ENCODE measurements at regions of chr15 and their contacts with region 1.

Region 1: DNA sequence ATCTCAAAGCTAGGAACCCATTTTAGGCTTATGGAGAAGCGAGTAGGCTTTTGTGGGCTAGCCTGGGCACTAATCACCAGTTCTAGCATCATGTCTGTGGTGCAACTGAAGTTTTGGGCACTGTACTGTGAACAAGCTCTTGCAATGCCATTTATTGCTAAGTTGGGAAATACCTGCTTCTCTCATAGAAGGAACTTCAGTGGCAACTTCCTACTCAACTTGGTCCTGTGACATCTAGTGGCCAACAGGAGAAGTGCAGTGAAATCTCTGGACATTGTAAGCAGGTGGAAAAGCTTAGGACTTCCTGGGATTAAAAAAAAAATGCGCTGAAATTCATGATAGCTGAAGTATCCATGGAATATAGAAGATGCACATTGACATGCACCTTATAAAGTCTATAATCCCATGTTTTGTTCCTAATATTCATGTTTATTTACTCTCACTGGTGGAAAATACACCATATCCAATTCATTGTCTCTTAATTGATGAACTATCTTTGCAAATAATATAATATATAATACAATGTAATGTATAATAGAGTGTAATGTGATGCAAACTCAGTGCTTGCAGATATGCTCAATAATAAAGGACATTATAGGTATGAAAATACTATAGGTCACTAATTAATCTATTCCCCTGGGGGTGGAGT is 6.5 kb upstream of the ALDH1A3 start:
- DNase-seq: peak; percentile 71
- ATAC-seq: peak; percentile 47
- H3K4me3 Mint-ChIP-seq: no peak overlapping the region
- H3K27ac Mint-ChIP-seq: no peak overlapping the region
- H3K4me1 Mint-ChIP-seq: peaks cover 17% of the 10 kb centered on the region
- H3K27me3 Mint-ChIP-seq: peaks cover 38% of the 10 kb centered on the region
- CTCF ChIP-seq: peak; percentile 83

Region 2: DNA sequence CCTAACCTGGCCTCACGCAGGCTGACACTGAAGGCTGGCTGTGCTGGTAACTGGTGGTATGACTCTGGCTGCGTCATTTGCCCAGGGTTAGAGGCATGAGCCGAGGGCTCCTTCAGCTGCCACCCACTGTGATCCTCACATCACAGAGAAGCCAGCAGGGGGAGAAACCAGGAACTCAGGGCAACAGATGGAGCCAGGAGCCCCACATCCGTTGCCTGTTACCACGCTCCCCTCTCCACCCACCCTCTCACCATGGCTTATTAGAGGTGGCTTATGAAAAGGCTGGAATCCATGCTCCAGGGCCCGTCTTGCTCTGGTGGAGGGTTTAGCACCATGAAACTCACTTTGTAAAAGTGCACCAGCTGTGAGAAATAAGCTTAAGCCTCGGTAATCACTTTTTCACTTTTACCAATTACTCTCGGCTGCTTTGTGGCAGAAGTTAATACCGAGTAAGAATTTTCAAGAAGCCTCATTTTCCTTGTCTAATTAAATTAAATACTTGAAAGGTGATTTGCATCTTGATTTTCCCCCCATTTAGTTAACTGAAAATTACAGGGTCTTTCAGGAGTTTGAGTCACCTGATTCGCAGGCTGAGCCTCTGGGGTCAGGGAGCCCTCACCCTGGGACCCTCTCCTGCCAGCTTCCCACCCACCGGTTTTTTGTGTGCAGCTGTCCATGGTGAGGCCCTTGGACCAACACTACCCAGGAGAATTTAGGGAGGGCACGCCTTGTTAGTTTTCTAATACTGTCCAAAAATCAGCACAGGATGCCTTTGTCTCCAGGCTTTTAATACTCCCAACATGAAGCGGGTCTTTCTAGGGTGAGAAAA is 209.9 kb before region 1 on chr15:
- CTCF ChIA-PET with region 1: interaction called, 10 read pairs
- POLR2A ChIA-PET with region 1: no interaction called
- DNase-seq: peak; percentile 59
- ATAC-seq: peak; percentile 91
- H3K4me3 Mint-ChIP-seq: no peak overlapping the region
- H3K27ac Mint-ChIP-seq: no peak overlapping the region
- H3K4me1 Mint-ChIP-seq: peaks cover 13% of the 10 kb centered on the region
- H3K27me3 Mint-ChIP-seq: no peaks in the 10 kb centered on the region
- CTCF ChIP-seq: no peak

Region 3: GRCh38 chr15:100737214-100737613 is 135.9 kb before region 1 on chr15:
- CTCF ChIA-PET with region 1: interaction called, 34 read pairs
- POLR2A ChIA-PET with region 1: no interaction called
- DNase-seq: no peak
- ATAC-seq: no peak
- H3K4me3 Mint-ChIP-seq: no peak overlapping the region
- H3K27ac Mint-ChIP-seq: no peak overlapping the region
- H3K4me1 Mint-ChIP-seq: no peaks in the 10 kb centered on the region
- H3K27me3 Mint-ChIP-seq: no peaks in the 10 kb centered on the region; the same call in 1 of the 2 replicates
- CTCF ChIP-seq: no peak

Region 4: DNA sequence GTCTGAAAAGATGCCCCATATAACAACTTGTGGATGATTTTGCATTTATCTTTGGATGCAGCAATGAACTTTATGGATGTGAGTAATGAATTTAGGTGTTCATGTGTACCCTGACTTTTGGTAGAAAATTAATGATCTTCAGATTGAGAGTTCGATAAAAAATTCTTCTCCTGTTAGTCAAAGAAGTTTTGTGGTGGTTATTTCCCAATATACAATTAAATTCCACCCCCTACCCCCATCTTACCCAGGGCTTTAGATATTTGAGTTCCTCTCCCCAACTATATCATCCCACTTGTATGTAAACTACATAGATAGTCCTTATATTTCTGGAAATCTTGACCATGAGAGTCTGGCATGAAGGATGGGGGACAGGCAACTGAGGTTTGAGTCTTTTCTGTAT is 119.7 kb before region 1 on chr15:
- CTCF ChIA-PET with region 1: no interaction called
- POLR2A ChIA-PET with region 1: no interaction called
- DNase-seq: no peak
- ATAC-seq: no peak
- H3K4me3 Mint-ChIP-seq: no peak overlapping the region
- H3K27ac Mint-ChIP-seq: no peak overlapping the region
- H3K4me1 Mint-ChIP-seq: peaks cover 19% of the 10 kb centered on the region
- H3K27me3 Mint-ChIP-seq: no peaks in the 10 kb centered on the region; the same call in 1 of the 2 replicates
- CTCF ChIP-seq: no peak

Region 5: GRCh38 chr15:100902436-100903167 is 29.4 kb after region 1 on chr15:
- CTCF ChIA-PET with region 1: interaction called, 11 read pairs
- POLR2A ChIA-PET with region 1: no interaction called
- DNase-seq: no peak
- ATAC-seq: no peak
- H3K4me3 Mint-ChIP-seq: no peak overlapping the region
- H3K27ac Mint-ChIP-seq: peak overlapping the region; percentile 45
- H3K4me1 Mint-ChIP-seq: peaks cover 7% of the 10 kb centered on the region; the same call in 1 of the 2 replicates
- H3K27me3 Mint-ChIP-seq: no peaks in the 10 kb centered on the region
- CTCF ChIP-seq: no peak

Measured in WTC11 (cell line).